Activated naive CD4-positive, alpha-beta T cell treated with anti-CD3 and anti-CD28 coated beads for 36 hours (primary cell): ENCODE measurements at regions of chr2 and their contacts with region 1.

Region 1: GRCh38 chr2:118186110-118186857 is 98.0 kb downstream of the INSIG2 start:
- DNase-seq: peak; percentile 90
- H3K4me3 Mint-ChIP-seq: peak overlapping the region; percentile 92
- H3K27ac Mint-ChIP-seq: peak overlapping the region; percentile 97
- H3K4me1 Mint-ChIP-seq: peaks cover 14% of the 10 kb centered on the region
- H3K27me3 Mint-ChIP-seq: no peaks in the 10 kb centered on the region

Region 2: GRCh38 chr2:118088051-118089024 is 97.9 kb before region 1 on chr2 and contains the start of gene INSIG2:
- CTCF ChIA-PET with region 1: interaction called, 3 read pairs
- intact Hi-C with region 1: loop called (anchors 1 kb)
- DNase-seq: peak; percentile 94
- H3K4me3 Mint-ChIP-seq: peak within 1 kb of the TSS; percentile 86
- H3K27ac Mint-ChIP-seq: peak within 1 kb of the TSS; percentile 83
- H3K4me1 Mint-ChIP-seq: peaks cover 16% of the 10 kb centered on the region
- H3K27me3 Mint-ChIP-seq: no peaks in the 10 kb centered on the region
- total RNA-seq, gene INSIG2: 14.3 to 19.3 TPM

Region 3: GRCh38 chr2:118309946-118310680 is 123.8 kb after region 1 on chr2:
- CTCF ChIA-PET with region 1: no interaction called
- intact Hi-C with region 1: loop called (anchors 5 kb)
- DNase-seq: peak; percentile 69
- H3K4me3 Mint-ChIP-seq: peak overlapping the region; percentile 79
- H3K27ac Mint-ChIP-seq: peak overlapping the region; percentile 90
- H3K4me1 Mint-ChIP-seq: peaks cover 2% of the 10 kb centered on the region
- H3K27me3 Mint-ChIP-seq: no peaks in the 10 kb centered on the region